ENCODE measurements at regions of chr17 and their contacts with region 1.

Region 1: DNA sequence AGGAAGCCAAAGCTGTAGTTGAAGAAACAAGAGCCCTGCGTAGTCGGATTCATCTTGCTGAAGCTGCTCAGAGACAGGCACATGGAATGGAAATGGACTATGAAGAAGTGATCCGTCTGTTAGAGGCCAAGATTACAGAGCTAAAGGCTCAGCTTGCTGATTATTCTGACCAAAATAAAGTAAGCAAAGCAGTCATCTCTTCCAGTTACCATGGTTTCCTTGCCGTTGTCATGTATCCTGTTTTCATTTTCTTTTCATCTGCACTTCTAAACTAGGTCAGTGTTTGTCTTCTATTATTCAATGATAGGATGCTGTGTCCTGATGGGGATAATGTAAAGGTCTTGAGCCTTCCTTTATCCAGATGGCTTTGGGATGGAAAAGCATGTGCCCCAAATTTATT is 104.3 kb downstream of the STXBP4 start:
- DNase-seq: no peak
- ATAC-seq: no peak
- H3K4me3 ChIP-seq: no peak overlapping the region
- H3K27ac ChIP-seq: no peak overlapping the region
- H3K4me1 ChIP-seq: no peaks in the 10 kb centered on the region
- H3K27me3 ChIP-seq: no peaks in the 10 kb centered on the region
- CTCF ChIP-seq: no peak

Region 2: GRCh38 chr17:54948380-54948779 is 124.5 kb before region 1 on chr17:
- intact Hi-C with region 1: no loop called
- DNase-seq: no peak
- ATAC-seq: peak; percentile 78
- H3K4me3 ChIP-seq: no peak overlapping the region
- H3K27ac ChIP-seq: no peak overlapping the region
- H3K4me1 ChIP-seq: no peaks in the 10 kb centered on the region
- H3K27me3 ChIP-seq: no peaks in the 10 kb centered on the region
- CTCF ChIP-seq: no peak

Region 3: GRCh38 chr17:54968262-54968987 is 104.5 kb before region 1 on chr17 and contains the starts of genes COX11 and STXBP4:
- intact Hi-C with region 1: no loop called
- DNase-seq: peak; percentile 95 to 99 (median 96)
- ATAC-seq: peak; percentile 96
- H3K4me3 ChIP-seq: peak within 1 kb of the TSS; percentile 66 to 93
- H3K27ac ChIP-seq: peak within 1 kb of the TSS; percentile 86 to 90
- H3K4me1 ChIP-seq: peaks cover 12 to 22% of the 10 kb centered on the region in 2 donors
- H3K27me3 ChIP-seq: no peaks in the 10 kb centered on the region
- CTCF ChIP-seq: no peak
- polyA plus RNA-seq, gene COX11: 74.3 to 99.4 (median 89.1) TPM
- polyA plus RNA-seq, gene STXBP4: 12.7 to 15.9 (median 14.2) TPM

Region 4: GRCh38 chr17:55005520-55005919 is 67.4 kb before region 1 on chr17:
- intact Hi-C with region 1: loop called in 1 of 2 experiments (anchors 10 kb)
- DNase-seq: no peak
- ATAC-seq: peak; percentile 53
- H3K4me3 ChIP-seq: no peak overlapping the region
- H3K27ac ChIP-seq: no peak overlapping the region
- H3K4me1 ChIP-seq: no peaks in the 10 kb centered on the region
- H3K27me3 ChIP-seq: no peaks in the 10 kb centered on the region
- CTCF ChIP-seq: peak in 1 of 2 donors; percentile 33

Region 5: DNA sequence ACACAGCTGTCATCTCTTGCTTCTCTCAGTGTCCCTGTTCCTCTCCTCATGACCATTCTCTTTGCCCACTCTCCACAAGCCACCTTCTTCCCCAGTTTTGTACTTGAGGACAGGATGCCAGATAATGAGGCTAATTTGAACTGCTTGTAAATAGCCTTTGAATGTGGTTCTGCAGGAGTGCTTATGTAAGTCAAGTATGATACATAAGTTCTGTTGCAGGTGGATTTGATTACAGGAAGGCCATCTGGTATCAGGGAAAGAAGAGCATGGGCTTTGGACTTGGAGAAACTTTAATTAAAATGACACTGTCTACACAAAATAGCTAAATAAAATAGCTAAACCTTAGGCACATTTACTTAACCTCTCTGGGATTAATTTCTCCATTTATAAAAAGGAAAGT is 71.6 kb after region 1 on chr17:
- intact Hi-C with region 1: no loop called
- DNase-seq: no peak
- ATAC-seq: no peak
- H3K4me3 ChIP-seq: no peak overlapping the region
- H3K27ac ChIP-seq: no peak overlapping the region
- H3K4me1 ChIP-seq: no peaks in the 10 kb centered on the region
- H3K27me3 ChIP-seq: no peaks in the 10 kb centered on the region
- CTCF ChIP-seq: no peak

Measured in left lung (tissue), 14 donors.